ENCODE measurements at regions of chr10 and their contacts with region 1.

Region 1: DNA sequence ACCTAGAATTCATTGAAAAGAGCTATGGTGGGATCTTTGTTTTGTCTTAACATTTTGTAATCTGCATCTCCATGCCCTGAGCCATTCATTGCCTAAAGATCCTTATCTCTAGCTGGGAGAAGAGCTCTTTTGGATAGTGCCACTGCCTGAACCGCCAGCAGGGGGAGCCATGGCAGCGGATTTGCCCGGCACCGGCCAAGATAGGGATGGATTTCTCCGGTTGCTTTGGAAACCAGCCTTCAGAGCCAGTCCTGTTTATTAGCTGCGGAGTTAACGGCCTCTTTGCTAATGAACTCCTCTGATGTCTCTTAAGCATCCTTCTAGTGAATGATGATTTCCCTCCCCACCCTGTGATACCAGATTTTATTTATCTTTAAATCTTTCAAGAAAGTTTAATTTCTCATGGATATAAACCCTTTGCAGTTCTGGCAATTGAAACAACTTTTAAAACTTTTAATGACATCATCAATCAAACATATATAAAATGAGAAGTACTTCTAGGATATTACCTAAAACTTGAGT is 58.2 kb upstream of the LYZL2 start:
- DNase-seq: peak; percentile 94
- H3K4me3 Mint-ChIP-seq: no peak overlapping the region
- H3K27ac Mint-ChIP-seq: peak overlapping the region; percentile 18
- H3K4me1 Mint-ChIP-seq: peaks cover 49% of the 10 kb centered on the region
- H3K27me3 Mint-ChIP-seq: peaks cover 3% of the 10 kb centered on the region

Region 2: GRCh38 chr10:30701451-30702173 is 13.9 kb after region 1 on chr10:
- intact Hi-C with region 1: loop called (anchors 1 kb)
- DNase-seq: peak; percentile 92
- H3K4me3 Mint-ChIP-seq: peak overlapping the region; percentile 76
- H3K27ac Mint-ChIP-seq: peak overlapping the region; percentile 95
- H3K4me1 Mint-ChIP-seq: peaks cover 78% of the 10 kb centered on the region
- H3K27me3 Mint-ChIP-seq: no peaks in the 10 kb centered on the region

Region 3: DNA sequence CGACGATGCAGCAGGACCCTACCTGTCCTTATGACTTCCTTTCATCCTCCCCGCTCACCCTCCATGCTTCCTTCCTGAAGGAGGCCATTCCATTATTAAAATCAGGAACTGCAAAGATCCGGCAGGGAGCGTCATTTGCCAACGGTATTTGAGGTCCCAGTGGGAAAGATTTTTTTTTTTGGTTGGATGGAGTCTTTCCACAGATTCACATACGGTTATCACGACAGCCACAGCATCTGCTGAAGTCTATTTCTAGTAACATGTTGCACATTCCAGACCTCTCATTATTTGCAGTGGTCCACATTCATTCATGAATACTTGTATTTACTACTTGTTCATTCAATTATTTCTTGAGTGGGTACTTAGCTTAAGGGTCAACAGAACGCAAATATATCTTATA is 36.5 kb after region 1 on chr10:
- intact Hi-C with region 1: no loop called
- DNase-seq: no peak
- H3K4me3 Mint-ChIP-seq: no peak overlapping the region
- H3K27ac Mint-ChIP-seq: no peak overlapping the region
- H3K4me1 Mint-ChIP-seq: peaks cover 6% of the 10 kb centered on the region
- H3K27me3 Mint-ChIP-seq: peaks cover 2% of the 10 kb centered on the region

Region 4: DNA sequence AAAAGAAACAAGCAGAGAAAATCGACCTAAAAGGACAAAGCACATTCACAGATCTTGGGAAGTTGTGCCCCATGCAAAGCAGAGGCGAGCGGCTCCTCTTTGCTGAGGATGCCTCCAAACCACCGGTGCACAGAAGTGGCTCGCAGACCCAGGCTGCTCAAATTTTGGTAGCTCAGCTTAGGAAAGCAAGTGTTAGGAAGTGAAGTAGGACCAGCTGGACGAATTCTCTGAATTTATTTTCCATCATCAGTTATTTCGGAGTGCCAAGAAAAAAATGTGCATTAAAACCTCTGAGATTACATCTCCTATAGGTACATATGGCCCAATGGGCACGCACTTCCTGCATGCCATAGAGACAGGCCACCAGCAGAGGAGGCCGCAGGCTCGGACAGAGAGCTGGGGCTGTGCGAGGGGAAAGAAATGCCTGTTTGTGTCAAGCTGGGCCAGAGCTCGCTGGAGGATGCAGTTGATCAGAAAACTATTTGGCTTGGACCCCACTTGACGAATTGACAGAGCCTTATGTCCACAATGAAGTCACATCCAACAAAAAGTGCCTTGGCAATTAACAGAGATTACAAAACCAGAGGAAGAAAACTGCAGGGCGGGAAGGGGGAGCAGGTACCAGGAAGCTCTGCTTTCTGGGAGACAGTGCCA is 64.0 kb after region 1 on chr10:
- intact Hi-C with region 1: loop called (anchors 1 kb)
- DNase-seq: no peak
- H3K4me3 Mint-ChIP-seq: peak overlapping the region; percentile 53
- H3K27ac Mint-ChIP-seq: peak overlapping the region; percentile 59
- H3K4me1 Mint-ChIP-seq: peaks cover 45% of the 10 kb centered on the region
- H3K27me3 Mint-ChIP-seq: no peaks in the 10 kb centered on the region

Region 5: GRCh38 chr10:31101123-31101522 is 413.4 kb after region 1 on chr10:
- intact Hi-C with region 1: loop called (anchors 1 kb)
- DNase-seq: peak; percentile 89
- H3K4me3 Mint-ChIP-seq: peak overlapping the region; percentile 76
- H3K27ac Mint-ChIP-seq: peak overlapping the region; percentile 93
- H3K4me1 Mint-ChIP-seq: peaks cover 60% of the 10 kb centered on the region
- H3K27me3 Mint-ChIP-seq: no peaks in the 10 kb centered on the region

Measured in activated CD4-positive, alpha-beta T cell treated with anti-CD3 and anti-CD28 coated beads, Interleukin-2, amount 10 ng/mL, durations not matched to agents 24 days and 14 days (primary cell).